ENCODE measurements at regions of chr5 and their contacts with region 1.

Region 1: GRCh38 chr5:132064738-132065331 is 4.4 kb downstream of the IL3 start:
- DNase-seq: peak; percentile 93
- ATAC-seq: peak; percentile 78
- H3K4me3 Mint-ChIP-seq: no peak overlapping the region
- H3K27ac Mint-ChIP-seq: peak overlapping the region; percentile 6
- H3K4me1 Mint-ChIP-seq: peaks cover 34% of the 10 kb centered on the region
- H3K27me3 Mint-ChIP-seq: no peaks in the 10 kb centered on the region
- CTCF ChIP-seq: peak; percentile 92

Region 2: DNA sequence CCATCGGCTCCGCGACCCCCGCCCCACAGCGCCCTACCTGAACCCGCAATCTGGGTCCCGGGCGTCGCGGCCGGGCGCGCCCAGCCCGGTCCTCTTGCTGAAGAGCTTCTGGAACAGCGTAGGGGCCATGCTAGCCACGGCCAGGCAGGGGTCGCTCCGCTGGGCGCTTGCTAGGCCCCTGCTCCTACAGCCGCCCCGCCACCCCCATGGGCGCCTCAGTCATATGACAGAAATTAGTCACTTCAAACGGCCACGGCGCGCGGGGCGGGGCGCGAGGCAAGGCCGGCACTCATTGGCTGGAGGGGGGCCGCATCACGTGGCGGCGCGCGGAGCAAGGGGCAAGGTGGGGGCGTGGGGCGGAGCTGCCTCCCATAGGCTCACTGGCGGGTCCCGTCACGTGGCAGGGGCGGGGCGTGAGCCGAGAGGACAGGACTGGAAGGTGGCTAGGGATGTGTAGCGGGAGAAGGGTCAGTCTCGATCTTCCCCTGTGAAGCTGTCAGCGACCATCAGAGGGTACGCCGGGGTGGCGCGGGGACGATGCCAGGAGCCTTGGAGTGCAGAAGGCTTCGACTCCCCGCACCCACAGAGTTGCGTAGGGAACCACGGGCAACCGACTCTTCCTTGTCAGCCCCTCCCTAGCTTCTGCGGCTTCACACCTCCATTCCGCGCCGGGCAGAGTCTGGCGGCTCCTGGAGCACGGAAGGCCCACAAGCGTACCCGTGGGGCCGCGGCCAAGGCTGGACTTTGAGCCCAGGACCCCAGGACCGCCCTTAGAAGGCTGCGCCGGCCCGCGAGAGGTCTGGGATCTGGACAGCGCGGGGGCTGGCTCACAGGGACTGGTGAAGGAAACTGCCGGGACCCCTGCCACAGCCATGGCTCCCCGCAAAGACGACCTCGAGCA is 267.8 kb before region 1 on chr5 and contains the start of gene FNIP1:
- CTCF ChIA-PET with region 1: interaction called, 4 read pairs
- POLR2A ChIA-PET with region 1: no interaction called
- intact Hi-C with region 1: loop called (anchors 5 kb)
- DNase-seq: peak; percentile 99
- ATAC-seq: peak; percentile 97
- H3K4me3 Mint-ChIP-seq: peak within 1 kb of the TSS; percentile 94
- H3K27ac Mint-ChIP-seq: peak within 1 kb of the TSS; percentile 92
- H3K4me1 Mint-ChIP-seq: peaks cover 30% of the 10 kb centered on the region
- H3K27me3 Mint-ChIP-seq: no peaks in the 10 kb centered on the region
- CTCF ChIP-seq: no peak
- total RNA-seq, gene FNIP1: 15.9 to 16.0 TPM

Region 3: GRCh38 chr5:132007399-132008165 is 57.3 kb before region 1 on chr5:
- CTCF ChIA-PET with region 1: interaction called, 45 read pairs
- POLR2A ChIA-PET with region 1: no interaction called
- intact Hi-C with region 1: no loop called
- DNase-seq: peak; percentile 93
- ATAC-seq: peak; percentile 72
- H3K4me3 Mint-ChIP-seq: no peak overlapping the region
- H3K27ac Mint-ChIP-seq: no peak overlapping the region
- H3K4me1 Mint-ChIP-seq: peaks cover 24% of the 10 kb centered on the region
- H3K27me3 Mint-ChIP-seq: peaks cover 22% of the 10 kb centered on the region
- CTCF ChIP-seq: peak; percentile 88

Region 4: DNA sequence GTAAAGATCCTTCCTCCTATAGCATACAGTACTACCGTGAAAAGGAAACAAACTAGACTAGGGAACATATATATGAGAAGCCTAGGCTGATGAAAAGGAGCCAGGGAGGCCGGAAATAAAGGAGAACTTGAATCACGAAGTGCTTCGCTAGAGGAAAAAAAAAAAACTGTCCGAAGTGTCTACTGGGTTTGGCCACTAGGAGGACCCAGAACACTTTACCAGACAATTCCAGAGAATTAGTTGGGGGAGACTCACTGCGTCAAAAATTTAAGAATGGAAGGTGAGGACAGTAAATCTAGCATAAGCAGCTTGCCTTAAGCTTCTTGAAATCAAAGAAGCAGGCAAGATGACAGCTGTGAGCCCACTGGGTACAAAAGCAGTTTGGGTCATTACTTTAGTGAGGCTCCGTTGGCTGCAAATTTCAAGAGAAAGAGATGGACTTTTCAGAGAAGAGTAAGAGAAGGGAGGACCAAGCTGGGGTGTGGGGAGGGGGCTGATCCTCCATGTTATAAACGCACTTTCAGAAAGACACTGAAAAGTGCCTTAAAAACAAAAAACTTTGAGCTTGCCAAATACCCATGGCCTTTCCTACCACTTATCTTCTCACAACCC is 115.4 kb after region 1 on chr5:
- CTCF ChIA-PET with region 1: interaction called, 20 read pairs
- POLR2A ChIA-PET with region 1: interaction called, 3 read pairs
- intact Hi-C with region 1: loop called (anchors 2 kb)
- DNase-seq: peak; percentile 26
- ATAC-seq: peak; percentile 26
- H3K4me3 Mint-ChIP-seq: no peak overlapping the region
- H3K27ac Mint-ChIP-seq: peak overlapping the region; percentile 47
- H3K4me1 Mint-ChIP-seq: peaks cover 36% of the 10 kb centered on the region
- H3K27me3 Mint-ChIP-seq: no peaks in the 10 kb centered on the region
- CTCF ChIP-seq: peak; percentile 75

Region 5: DNA sequence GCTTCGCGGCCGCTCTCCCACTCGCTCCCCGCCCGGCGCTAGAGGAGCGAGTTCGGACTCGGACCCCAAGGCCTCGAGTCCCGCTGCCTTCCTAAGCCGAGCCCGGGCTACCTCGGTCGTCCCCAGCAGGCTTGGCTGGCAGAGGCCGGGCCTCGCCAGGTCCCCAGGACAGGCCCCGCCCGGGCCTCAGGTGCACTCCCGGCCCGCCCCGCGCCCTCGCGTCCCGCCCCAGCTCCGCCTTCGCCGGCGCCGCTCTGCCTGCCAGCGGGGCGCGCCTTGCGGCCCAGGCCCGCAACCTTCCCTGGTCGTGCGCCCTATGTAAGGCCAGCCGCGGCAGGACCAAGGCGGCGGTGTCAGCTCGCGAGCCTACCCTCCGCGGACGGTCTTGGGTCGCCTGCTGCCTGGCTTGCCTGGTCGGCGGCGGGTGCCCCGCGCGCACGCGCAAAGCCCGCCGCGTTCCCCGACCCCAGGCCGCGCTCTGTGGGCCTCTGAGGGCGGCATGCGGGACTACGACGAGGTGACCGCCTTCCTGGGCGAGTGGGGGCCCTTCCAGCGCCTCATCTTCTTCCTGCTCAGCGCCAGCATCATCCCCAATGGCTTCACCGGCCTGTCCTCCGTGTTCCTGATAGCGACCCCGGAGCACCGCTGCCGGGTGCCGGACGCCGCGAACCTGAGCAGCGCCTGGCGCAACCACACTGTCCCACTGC is 304.8 kb after region 1 on chr5 and contains the start of gene SLC22A5:
- CTCF ChIA-PET with region 1: interaction called, 10 read pairs
- POLR2A ChIA-PET with region 1: no interaction called
- intact Hi-C with region 1: loop called (anchors 10 kb)
- DNase-seq: peak; percentile 73
- ATAC-seq: peak; percentile 96
- H3K4me3 Mint-ChIP-seq: peak within 1 kb of the TSS; percentile 82
- H3K27ac Mint-ChIP-seq: peak within 1 kb of the TSS; percentile 84
- H3K4me1 Mint-ChIP-seq: peaks cover 28% of the 10 kb centered on the region
- H3K27me3 Mint-ChIP-seq: no peaks in the 10 kb centered on the region
- CTCF ChIP-seq: no peak
- total RNA-seq, gene SLC22A5: 4.0 to 4.1 TPM

Measured in activated CD8-positive, alpha-beta T cell treated with anti-CD3 and anti-CD28 coated beads for 36 hours (primary cell).